ENCODE measurements at regions of chr1 and their contacts with region 1.

Region 1: GRCh38 chr1:235504496-235505222 is 407 bp upstream of the B3GALNT2 start:
- DNase-seq: peak; percentile 99
- ATAC-seq: peak; percentile 83
- H3K4me3 ChIP-seq: peak overlapping the region; percentile 41 to 97 (median 93)
- H3K4me3 Mint-ChIP-seq: peak overlapping the region; percentile 99
- H3K27ac ChIP-seq: peak overlapping the region; percentile 85 to 92
- H3K27ac Mint-ChIP-seq: peak overlapping the region; percentile 90
- H3K4me1 ChIP-seq: peaks cover 7 to 12% of the 10 kb centered on the region in 2 donors
- H3K4me1 Mint-ChIP-seq: peaks cover 24% of the 10 kb centered on the region
- H3K27me3 ChIP-seq: no peaks in the 10 kb centered on the region
- H3K27me3 Mint-ChIP-seq: peaks cover 3% of the 10 kb centered on the region
- CTCF ChIP-seq: peak; percentile 90

Region 2: GRCh38 chr1:234478481-234479309 is 1026.0 kb before region 1 on chr1 and contains the start of gene TARBP1:
- CTCF ChIA-PET with region 1: interaction called, 3 read pairs
- POLR2A ChIA-PET with region 1: no interaction called
- intact Hi-C with region 1: loop called (anchors 5 kb)
- DNase-seq: peak; percentile 93
- ATAC-seq: peak; percentile 68
- H3K4me3 ChIP-seq: peak within 1 kb of the TSS; percentile 46 to 76 (median 68)
- H3K4me3 Mint-ChIP-seq: peak within 1 kb of the TSS; percentile 87
- H3K27ac ChIP-seq: peak within 1 kb of the TSS; percentile 49 to 69
- H3K27ac Mint-ChIP-seq: peak within 1 kb of the TSS; percentile 89
- H3K4me1 ChIP-seq: peaks cover 30 to 36% of the 10 kb centered on the region in 2 donors
- H3K4me1 Mint-ChIP-seq: peaks cover 38% of the 10 kb centered on the region
- H3K27me3 ChIP-seq: no peaks in the 10 kb centered on the region
- H3K27me3 Mint-ChIP-seq: peaks cover 6% of the 10 kb centered on the region
- CTCF ChIP-seq: no peak
- total RNA-seq, gene TARBP1: 35.4 and 36.0 TPM in 2 replicates

Region 3: DNA sequence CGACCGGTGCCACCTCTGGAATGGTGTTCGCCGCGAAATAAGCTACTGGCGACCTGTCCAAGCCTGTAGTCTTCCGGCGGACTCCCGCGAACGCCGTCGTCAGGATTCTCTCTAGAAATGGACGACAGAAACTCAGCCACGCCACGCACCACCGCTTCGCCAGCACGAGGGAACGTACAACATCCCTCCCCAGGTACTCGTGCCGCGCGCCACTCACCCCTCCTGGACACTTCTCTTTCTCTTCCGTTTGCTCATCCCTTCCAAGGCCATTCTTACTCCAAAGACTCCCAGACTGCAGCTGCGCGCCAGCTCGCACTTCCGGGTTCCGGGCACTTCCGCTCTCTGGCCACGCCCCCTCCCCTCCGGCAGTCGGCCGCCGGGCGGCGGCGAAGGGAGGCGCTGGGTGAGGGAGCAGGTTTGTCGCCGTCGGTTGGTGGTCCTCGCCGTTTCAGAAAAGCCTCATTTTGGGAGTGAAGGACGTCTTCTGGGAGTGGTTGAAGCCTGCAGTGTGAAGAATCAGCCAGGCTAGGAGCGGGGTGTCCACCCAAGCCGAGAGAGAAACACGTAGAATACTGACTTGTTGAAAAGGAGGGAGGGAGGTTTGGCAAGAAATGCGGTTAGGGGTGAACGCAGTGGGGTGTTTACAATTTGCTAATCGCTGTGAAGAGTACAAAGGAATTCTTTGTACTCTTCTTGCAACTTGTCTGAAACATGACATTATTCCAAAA is 343.5 kb before region 1 on chr1 and contains the start of gene RBM34:
- CTCF ChIA-PET with region 1: no interaction called
- POLR2A ChIA-PET with region 1: interaction called, 3 read pairs
- intact Hi-C with region 1: loop called (anchors 2 kb)
- DNase-seq: peak; percentile 95
- ATAC-seq: peak; percentile 92
- H3K4me3 ChIP-seq: peak within 1 kb of the TSS; percentile 67 to 97 (median 78)
- H3K4me3 Mint-ChIP-seq: peak within 1 kb of the TSS; percentile 97
- H3K27ac ChIP-seq: peak within 1 kb of the TSS; percentile 89 to 92
- H3K27ac Mint-ChIP-seq: peak within 1 kb of the TSS; percentile 99
- H3K4me1 ChIP-seq: peaks cover 12 to 21% of the 10 kb centered on the region in 2 donors
- H3K4me1 Mint-ChIP-seq: peaks cover 20% of the 10 kb centered on the region
- H3K27me3 ChIP-seq: no peaks in the 10 kb centered on the region
- H3K27me3 Mint-ChIP-seq: no peaks in the 10 kb centered on the region
- CTCF ChIP-seq: peak; percentile 25
- total RNA-seq, gene RBM34: 131 and 137 TPM in 2 replicates

Region 4: GRCh38 chr1:235367000-235367908 is 137.4 kb before region 1 on chr1 and contains the start of gene TBCE:
- CTCF ChIA-PET with region 1: no interaction called
- POLR2A ChIA-PET with region 1: no interaction called
- intact Hi-C with region 1: loop called (anchors 10 kb)
- DNase-seq: peak; percentile 84
- ATAC-seq: peak; percentile 100
- H3K4me3 ChIP-seq: peak within 1 kb of the TSS; percentile 79 to 97 (median 86)
- H3K4me3 Mint-ChIP-seq: peak within 1 kb of the TSS; percentile 99
- H3K27ac ChIP-seq: peak within 1 kb of the TSS; percentile 59 to 77
- H3K27ac Mint-ChIP-seq: peak within 1 kb of the TSS; percentile 94
- H3K4me1 ChIP-seq: peaks cover 12% of the 10 kb centered on the region in 2 donors
- H3K4me1 Mint-ChIP-seq: peaks cover 25% of the 10 kb centered on the region
- H3K27me3 ChIP-seq: no peaks in the 10 kb centered on the region
- H3K27me3 Mint-ChIP-seq: no peaks in the 10 kb centered on the region
- CTCF ChIP-seq: no peak
- total RNA-seq, gene TBCE: 18.4 and 22.1 TPM in 2 replicates

Region 5: DNA sequence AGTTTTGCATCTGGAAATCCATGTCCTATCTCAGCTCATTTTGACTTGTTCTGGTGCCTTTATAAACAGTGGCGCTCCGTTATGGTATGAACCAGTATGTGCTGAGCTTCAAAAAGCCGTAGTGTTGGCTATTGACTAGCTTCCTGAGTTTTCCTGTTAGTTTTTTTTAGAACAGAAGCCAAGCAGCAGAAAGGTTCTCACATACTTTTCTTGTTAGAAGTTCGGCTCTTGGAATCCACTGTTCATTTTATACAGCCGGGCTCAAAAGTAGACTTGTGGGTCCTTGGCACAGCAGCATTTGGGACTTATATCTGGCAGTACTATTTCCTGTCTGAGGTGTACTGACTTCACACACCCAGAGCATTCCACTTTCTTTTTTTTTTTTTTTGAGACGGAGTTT is 73.7 kb before region 1 on chr1:
- CTCF ChIA-PET with region 1: no interaction called
- POLR2A ChIA-PET with region 1: no interaction called
- intact Hi-C with region 1: no loop called
- DNase-seq: no peak
- ATAC-seq: no peak
- H3K4me3 ChIP-seq: no peak overlapping the region
- H3K4me3 Mint-ChIP-seq: no peak overlapping the region
- H3K27ac ChIP-seq: no peak overlapping the region
- H3K27ac Mint-ChIP-seq: no peak overlapping the region
- H3K4me1 ChIP-seq: no peaks in the 10 kb centered on the region
- H3K4me1 Mint-ChIP-seq: peaks cover 10% of the 10 kb centered on the region
- H3K27me3 ChIP-seq: no peaks in the 10 kb centered on the region
- H3K27me3 Mint-ChIP-seq: no peaks in the 10 kb centered on the region
- CTCF ChIP-seq: no peak

Region 6: DNA sequence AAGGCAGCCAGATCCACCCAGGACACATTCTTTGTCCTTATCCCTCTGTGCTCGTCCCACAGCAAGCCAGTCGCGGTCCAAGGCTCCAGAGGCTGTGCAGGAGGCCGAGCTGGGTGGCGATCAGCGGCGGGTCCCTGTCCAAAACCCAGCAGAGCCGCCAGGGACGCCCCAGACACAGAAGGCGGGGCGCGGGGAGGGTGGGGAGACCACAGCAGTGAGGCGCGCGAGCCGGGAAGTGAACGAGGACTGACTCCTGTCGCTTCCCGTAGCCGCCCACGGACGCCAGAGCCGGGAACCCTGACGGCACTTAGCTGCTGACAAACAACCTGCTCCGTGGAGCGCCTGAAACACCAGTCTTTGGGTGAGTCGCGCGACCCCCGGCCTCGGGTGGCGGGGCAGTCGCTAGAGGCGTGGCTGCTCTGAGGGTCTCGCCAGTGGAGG is 1019.1 kb after region 1 on chr1 and contains the start of gene LGALS8:
- CTCF ChIA-PET with region 1: no interaction called
- POLR2A ChIA-PET with region 1: interaction called, 3 read pairs
- intact Hi-C with region 1: loop called (anchors 5 kb)
- DNase-seq: peak; percentile 87
- ATAC-seq: peak; percentile 64
- H3K4me3 ChIP-seq: peak within 1 kb of the TSS; percentile 70 to 99 (median 96)
- H3K4me3 Mint-ChIP-seq: peak within 1 kb of the TSS; percentile 99
- H3K27ac ChIP-seq: peak within 1 kb of the TSS; percentile 78
- H3K27ac Mint-ChIP-seq: peak within 1 kb of the TSS; percentile 97
- H3K4me1 ChIP-seq: peaks cover 8 to 9% of the 10 kb centered on the region in 2 donors
- H3K4me1 Mint-ChIP-seq: peaks cover 16% of the 10 kb centered on the region
- H3K27me3 ChIP-seq: no peaks in the 10 kb centered on the region
- H3K27me3 Mint-ChIP-seq: no peaks in the 10 kb centered on the region
- CTCF ChIP-seq: no peak
- total RNA-seq, gene LGALS8: 64.9 and 67.0 TPM in 2 replicates

Region 7: GRCh38 chr1:236795035-236795756 is 1290.5 kb after region 1 on chr1 and contains the start of gene MTR:
- CTCF ChIA-PET with region 1: no interaction called
- POLR2A ChIA-PET with region 1: no interaction called
- intact Hi-C with region 1: loop called (anchors 2 kb)
- DNase-seq: peak; percentile 96
- ATAC-seq: peak; percentile 95
- H3K4me3 ChIP-seq: peak within 1 kb of the TSS; percentile 82 to 96 (median 93)
- H3K4me3 Mint-ChIP-seq: peak within 1 kb of the TSS; percentile 88
- H3K27ac ChIP-seq: peak within 1 kb of the TSS; percentile 88 to 95
- H3K27ac Mint-ChIP-seq: peak within 1 kb of the TSS; percentile 88
- H3K4me1 ChIP-seq: peaks cover 14% of the 10 kb centered on the region in 2 donors
- H3K4me1 Mint-ChIP-seq: peaks cover 35% of the 10 kb centered on the region
- H3K27me3 ChIP-seq: no peaks in the 10 kb centered on the region
- H3K27me3 Mint-ChIP-seq: peaks cover 21% of the 10 kb centered on the region
- CTCF ChIP-seq: no peak
- total RNA-seq, gene MTR: 49.1 and 50.4 TPM in 2 replicates

Measured in B cell (primary cell).